Heart right ventricle (tissue), 16 donors: ENCODE measurements at regions of chr4 and their contacts with region 1.

Region 1: GRCh38 chr4:90474484-90474883 is 347.3 kb downstream of the CCSER1 start:
- DNase-seq: no peak
- ATAC-seq: no peak
- H3K4me3 ChIP-seq: no peak overlapping the region
- H3K27ac ChIP-seq: no peak overlapping the region
- H3K4me1 ChIP-seq: no peaks in the 10 kb centered on the region
- H3K27me3 ChIP-seq: no peaks in the 10 kb centered on the region
- CTCF ChIP-seq: no peak

Region 2: DNA sequence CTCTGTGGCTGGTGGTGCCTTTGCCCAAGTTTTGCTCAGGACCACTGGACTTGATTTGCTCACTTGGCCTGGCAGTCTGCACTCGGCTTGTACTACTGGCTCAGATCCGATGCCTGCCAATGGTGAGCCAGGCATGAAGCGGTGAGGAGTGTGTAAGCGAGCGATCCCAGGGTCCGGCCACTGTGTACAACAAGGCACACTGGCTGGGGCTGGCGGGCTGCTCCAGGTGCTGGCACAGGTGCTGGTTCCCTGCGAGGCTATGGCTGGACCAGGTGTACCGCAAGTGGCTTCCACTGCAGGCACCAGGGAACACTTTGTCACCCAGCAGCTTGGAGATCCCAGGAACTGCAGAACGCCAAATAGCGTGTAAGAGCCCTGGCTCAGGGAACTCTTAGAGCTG is 17.6 kb before region 1 on chr4:
- intact Hi-C with region 1: loop called in 1 of 10 experiments (anchors 1 kb)
- DNase-seq: no peak
- ATAC-seq: no peak
- H3K4me3 ChIP-seq: no peak overlapping the region
- H3K27ac ChIP-seq: no peak overlapping the region
- H3K4me1 ChIP-seq: no peaks in the 10 kb centered on the region
- H3K27me3 ChIP-seq: no peaks in the 10 kb centered on the region
- CTCF ChIP-seq: no peak